SK-N-SH (cell line): ENCODE measurements at regions of chr20 and their contacts with region 1.

Region 1: DNA sequence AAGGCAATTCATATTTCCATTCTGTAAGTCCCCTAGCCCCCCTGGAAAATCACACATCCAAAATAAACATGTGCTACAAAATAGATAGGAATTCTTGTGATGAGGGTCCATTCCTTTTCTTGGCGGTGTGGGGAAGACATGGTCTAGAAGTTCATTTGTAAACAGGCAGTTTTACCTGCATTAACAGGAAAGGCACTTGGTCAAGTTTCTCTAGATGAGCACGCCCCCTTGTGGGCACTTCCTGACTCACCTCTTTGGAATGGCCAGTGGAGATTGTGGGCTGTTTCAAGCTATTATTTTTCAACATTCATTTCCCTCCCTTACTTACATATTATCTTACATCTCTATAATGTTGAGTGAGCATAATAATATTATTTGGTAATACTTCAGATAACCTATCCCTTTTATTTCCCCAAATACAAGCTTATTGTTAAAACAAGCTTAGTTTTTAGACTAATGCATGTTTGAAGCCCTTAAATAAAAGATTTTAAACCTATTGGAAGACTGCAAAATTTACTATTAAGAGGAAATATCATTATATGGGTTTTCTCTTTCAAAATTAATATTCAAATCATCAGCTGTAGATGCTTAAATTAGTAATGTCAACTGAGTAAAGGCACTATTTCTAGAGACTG is 92.1 kb downstream of the TASP1 start:
- DNase-seq: peak; percentile 33
- H3K4me3 ChIP-seq: peak overlapping the region in 1 of 2 experiments; percentile 9; a peak in 1 of 4 replicates
- H3K27ac ChIP-seq: no peak overlapping the region
- H3K4me1 ChIP-seq: no peaks in the 10 kb centered on the region
- H3K27me3 ChIP-seq: no peaks in the 10 kb centered on the region
- CTCF ChIP-seq: peak; percentile 92
- EP300 ChIP-seq: no peak
- RAD21 ChIP-seq: peak; percentile 86

Region 2: DNA sequence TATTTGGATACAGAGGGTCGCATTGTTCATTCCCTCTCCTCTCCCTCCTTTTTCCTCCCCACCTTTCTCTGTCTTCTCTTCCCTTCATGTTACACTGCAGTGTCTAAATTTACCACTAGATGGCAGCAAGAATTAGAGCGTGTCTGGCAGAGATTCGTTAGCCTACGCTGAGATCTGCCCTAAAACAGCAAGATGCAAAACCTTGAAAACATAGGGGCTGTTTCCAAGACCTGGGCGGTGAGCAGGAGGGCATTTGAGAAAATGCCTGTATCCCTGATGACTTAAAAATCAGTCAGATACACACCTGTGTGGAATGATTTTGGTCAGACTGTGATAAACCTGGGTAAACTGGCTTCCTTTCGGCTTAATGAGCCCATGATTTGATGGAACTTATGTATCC is 427.0 kb before region 1 on chr20:
- CTCF ChIA-PET with region 1: interaction called, 31 read pairs
- POLR2A ChIA-PET with region 1: no interaction called
- DNase-seq: peak; percentile 51
- H3K4me3 ChIP-seq: peak overlapping the region in 1 of 2 experiments; percentile 13; a peak in 1 of 4 replicates
- H3K27ac ChIP-seq: no peak overlapping the region
- H3K4me1 ChIP-seq: no peaks in the 10 kb centered on the region
- H3K27me3 ChIP-seq: no peaks in the 10 kb centered on the region
- CTCF ChIP-seq: peak; percentile 88
- EP300 ChIP-seq: no peak
- RAD21 ChIP-seq: peak; percentile 90

Region 3: DNA sequence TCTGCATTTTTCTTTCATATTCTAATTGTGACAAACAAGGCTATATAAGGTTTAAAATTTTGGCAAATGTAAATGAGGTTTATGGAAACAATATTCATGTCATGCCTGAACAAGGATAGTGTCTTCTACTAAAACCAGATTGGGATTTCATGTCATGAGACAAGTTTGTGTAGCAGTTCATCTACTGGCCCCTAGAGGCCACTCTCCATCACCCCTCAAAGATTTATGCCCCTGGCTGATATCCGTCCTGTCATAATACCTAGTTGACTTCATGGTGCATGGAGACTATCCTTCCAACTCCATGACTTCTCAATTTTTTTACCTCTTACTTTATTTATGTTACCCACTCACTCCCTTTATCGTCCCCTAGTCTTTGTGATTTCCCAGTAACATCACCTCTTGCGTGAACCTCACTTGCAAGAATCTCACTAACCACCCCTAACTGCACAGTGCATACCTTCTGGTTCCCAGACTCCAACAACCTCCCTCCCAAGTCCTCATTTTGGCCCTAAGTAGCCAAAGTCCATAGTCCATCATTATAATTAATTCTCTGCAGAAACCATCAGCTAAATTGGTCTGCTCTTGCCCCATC is 87.7 kb before region 1 on chr20:
- CTCF ChIA-PET with region 1: interaction called, 39 read pairs
- POLR2A ChIA-PET with region 1: no interaction called
- DNase-seq: peak; percentile 33
- H3K4me3 ChIP-seq: no peak overlapping the region; a peak in 1 of 4 replicates
- H3K27ac ChIP-seq: no peak overlapping the region
- H3K4me1 ChIP-seq: peaks cover 0 to 13% of the 10 kb centered on the region in 2 experiments; a peak in 1 of 4 replicates
- H3K27me3 ChIP-seq: no peaks in the 10 kb centered on the region
- CTCF ChIP-seq: peak; percentile 84
- EP300 ChIP-seq: no peak
- RAD21 ChIP-seq: peak; percentile 72

Region 4: DNA sequence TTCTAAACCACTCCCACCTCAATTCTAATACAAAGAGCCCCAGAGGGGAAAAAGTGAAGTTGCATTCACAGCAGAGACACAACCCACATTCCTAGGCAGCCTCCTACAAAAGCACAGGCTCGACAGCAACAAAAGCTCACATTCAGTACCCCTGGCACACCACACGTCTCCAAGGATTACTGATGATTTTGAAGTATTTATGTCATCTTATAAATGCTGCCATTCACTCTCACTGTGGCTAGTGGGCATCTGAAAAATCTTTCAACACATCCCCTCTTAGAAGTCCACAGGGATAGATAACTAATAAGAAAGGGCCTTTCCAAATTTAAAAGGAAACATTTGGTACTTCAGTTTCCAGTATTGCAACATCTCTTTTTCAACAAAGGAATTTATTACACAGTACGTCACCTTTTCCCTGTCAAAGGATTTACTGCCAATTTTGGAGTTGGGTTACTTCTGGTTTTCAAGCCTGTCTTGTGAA is 54.6 kb before region 1 on chr20:
- CTCF ChIA-PET with region 1: interaction called, 11 read pairs
- POLR2A ChIA-PET with region 1: no interaction called
- DNase-seq: no peak
- H3K4me3 ChIP-seq: no peak overlapping the region
- H3K27ac ChIP-seq: no peak overlapping the region
- H3K4me1 ChIP-seq: peaks cover 3 to 13% of the 10 kb centered on the region in 2 experiments; a peak in 3 of 4 replicates
- H3K27me3 ChIP-seq: no peaks in the 10 kb centered on the region
- CTCF ChIP-seq: no peak
- EP300 ChIP-seq: no peak
- RAD21 ChIP-seq: no peak

Region 5: GRCh38 chr20:13533946-13534345 is 12.7 kb before region 1 on chr20:
- CTCF ChIA-PET with region 1: interaction called, 30 read pairs
- POLR2A ChIA-PET with region 1: no interaction called
- DNase-seq: no peak
- H3K4me3 ChIP-seq: no peak overlapping the region
- H3K27ac ChIP-seq: no peak overlapping the region
- H3K4me1 ChIP-seq: no peaks in the 10 kb centered on the region
- H3K27me3 ChIP-seq: no peaks in the 10 kb centered on the region
- CTCF ChIP-seq: no peak
- EP300 ChIP-seq: no peak
- RAD21 ChIP-seq: no peak

Region 6: DNA sequence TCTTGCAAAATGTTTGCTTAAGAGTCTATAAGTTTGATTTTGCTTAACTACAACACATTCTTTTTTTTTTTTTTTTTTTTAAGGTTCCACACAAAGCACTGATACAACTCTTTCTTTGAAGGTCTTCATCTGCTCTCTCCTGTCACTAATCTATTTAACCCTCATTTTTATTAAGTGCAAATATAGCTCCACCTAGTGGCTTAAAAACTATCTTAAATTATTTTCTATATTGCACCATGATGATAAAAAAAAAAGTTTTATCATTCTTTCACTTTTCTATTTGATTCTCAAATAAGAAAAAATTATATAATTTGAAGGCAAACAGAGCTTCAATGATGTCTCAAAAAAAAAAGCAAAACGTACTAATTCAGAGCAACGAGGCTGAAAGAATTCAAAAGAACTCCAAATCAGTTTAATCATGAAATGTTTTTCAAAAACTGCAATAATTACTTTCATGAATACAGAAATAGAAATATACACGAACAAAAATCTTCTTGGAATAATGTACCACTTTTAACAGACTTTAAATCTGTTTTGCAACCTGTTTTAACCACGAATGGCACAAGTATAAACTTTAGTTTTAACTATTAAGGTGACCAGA is 225.3 kb after region 1 on chr20:
- CTCF ChIA-PET with region 1: interaction called, 34 read pairs
- POLR2A ChIA-PET with region 1: no interaction called
- DNase-seq: peak; percentile 50
- H3K4me3 ChIP-seq: no peak overlapping the region
- H3K27ac ChIP-seq: 0 out of 4 replicates have a peak overlapping the region, but pooled peaks of 1 of the 2 experiments have one; percentile 12
- H3K4me1 ChIP-seq: peaks cover 0 to 12% of the 10 kb centered on the region in 2 experiments; a peak in 1 of 4 replicates
- H3K27me3 ChIP-seq: no peaks in the 10 kb centered on the region
- CTCF ChIP-seq: peak; percentile 71
- EP300 ChIP-seq: no peak
- RAD21 ChIP-seq: peak; percentile 61